Transverse colon (tissue), 4 donors: ENCODE measurements at regions of chr3 and their contacts with region 1.

Region 1: DNA sequence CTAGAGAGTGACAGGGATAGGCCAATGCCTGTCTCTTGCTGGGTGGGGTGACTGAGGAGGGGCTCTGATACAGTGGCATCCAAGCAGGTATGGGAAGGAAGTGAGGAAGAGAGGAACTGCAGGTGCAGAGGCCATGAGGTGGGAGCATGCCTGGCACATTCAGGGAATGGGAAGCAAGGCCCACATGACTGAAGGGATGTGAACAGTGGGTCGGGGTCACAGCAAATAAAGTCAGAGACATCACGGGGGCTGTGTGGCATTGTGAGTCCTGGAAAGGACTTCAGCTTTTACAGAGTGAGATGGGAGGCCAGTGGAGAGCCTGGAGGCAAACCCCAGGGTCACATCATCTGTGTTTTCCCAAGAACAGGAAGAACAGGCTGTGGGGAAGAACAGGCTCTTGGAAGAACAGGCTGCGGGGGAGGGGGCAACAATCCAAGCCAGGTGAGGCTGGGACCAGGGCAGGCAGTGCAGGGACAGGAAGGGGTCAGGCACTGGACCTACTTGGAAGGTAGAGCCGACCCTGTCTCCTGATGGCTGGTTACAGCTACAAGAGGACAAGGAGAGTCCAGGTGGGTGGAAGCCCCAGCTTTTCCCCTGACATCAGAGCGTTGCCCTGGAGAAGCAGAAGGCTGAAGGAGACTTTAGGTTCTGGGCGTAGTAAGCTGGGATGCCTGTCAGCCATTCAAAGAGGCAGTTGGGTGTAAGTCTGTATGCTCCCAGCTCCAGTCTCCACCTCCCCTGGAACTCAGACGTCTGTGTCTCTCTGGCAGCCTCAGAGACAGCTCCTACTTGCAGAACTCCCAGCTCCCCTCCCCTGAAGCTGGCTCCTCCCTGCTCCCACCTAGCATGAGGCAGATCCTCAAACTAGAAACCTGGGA is 131.1 kb downstream of the DNAJB8 start:
- DNase-seq: no peak
- H3K4me3 ChIP-seq: no peak overlapping the region
- H3K27ac ChIP-seq: no peak overlapping the region
- H3K4me1 ChIP-seq: no peaks in the 10 kb centered on the region
- H3K27me3 ChIP-seq: no peaks in the 10 kb centered on the region
- CTCF ChIP-seq: no peak
- EP300 ChIP-seq: no peak
- POLR2A ChIP-seq: no peak

Region 2: DNA sequence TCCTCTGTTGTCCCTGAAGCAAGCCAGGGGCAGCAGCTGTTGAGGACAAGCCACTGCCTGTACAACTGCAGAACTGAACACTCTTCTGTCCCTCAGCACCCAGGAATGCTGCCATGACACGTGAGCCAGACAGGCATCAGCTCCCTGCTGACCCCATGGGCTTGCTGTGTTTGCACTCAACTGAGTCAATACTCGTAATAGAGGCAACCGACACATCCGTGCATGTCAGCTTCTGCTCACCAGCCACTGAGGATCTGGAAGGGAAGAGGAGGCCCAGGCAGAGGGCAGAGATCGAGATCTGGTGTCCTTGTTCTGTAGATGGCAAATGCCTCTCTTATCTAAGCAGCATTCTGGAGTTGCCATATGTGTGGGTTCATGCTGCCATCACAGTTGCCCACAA is 337.6 kb before region 1 on chr3:
- in situ Hi-C with region 1: no loop called
- intact Hi-C with region 1: no loop called
- DNase-seq: no peak
- H3K4me3 ChIP-seq: no peak overlapping the region
- H3K27ac ChIP-seq: no peak overlapping the region
- H3K4me1 ChIP-seq: no peaks in the 10 kb centered on the region
- H3K27me3 ChIP-seq: peaks cover 4% of the 10 kb centered on the region
- CTCF ChIP-seq: no peak
- EP300 ChIP-seq: no peak
- POLR2A ChIP-seq: no peak

Region 3: GRCh38 chr3:128415773-128416577 is 80.4 kb after region 1 on chr3:
- in situ Hi-C with region 1: no loop called
- intact Hi-C with region 1: loop called (anchors 1 kb)
- DNase-seq: no peak
- H3K4me3 ChIP-seq: no peak overlapping the region
- H3K27ac ChIP-seq: no peak overlapping the region
- H3K4me1 ChIP-seq: no peaks in the 10 kb centered on the region
- H3K27me3 ChIP-seq: no peaks in the 10 kb centered on the region
- CTCF ChIP-seq: no peak
- EP300 ChIP-seq: no peak
- POLR2A ChIP-seq: no peak